ENCODE measurements at regions of chr4 and their contacts with region 1.

Region 1: GRCh38 chr4:112279025-112279881 is 6.5 kb downstream of the TIFA start:
- DNase-seq: no peak
- ATAC-seq: no peak

Region 2: GRCh38 chr4:110898290-110898689 is 1381.0 kb before region 1 on chr4:
- intact Hi-C with region 1: loop called (anchors 5 kb)
- DNase-seq: no peak
- ATAC-seq: no peak